GM12878 (cell line): ENCODE measurements at regions of chr16 and their contacts with region 1.

Region 1: GRCh38 chr16:11972128-11972527 is 4.4 kb upstream of the SNX29 start:
- DNase-seq: no peak
- ATAC-seq: no peak
- H3K4me3 ChIP-seq: no peak overlapping the region
- H3K27ac ChIP-seq: no peak overlapping the region
- H3K4me1 ChIP-seq: peaks cover 19% of the 10 kb centered on the region
- H3K27me3 ChIP-seq: no peaks in the 10 kb centered on the region
- CTCF ChIP-seq: peak; percentile 18 to 28 (median 21); a peak in 2 of 6 replicates
- EP300 ChIP-seq: no peak
- POLR2A ChIP-seq: no peak
- RAD21 ChIP-seq: no peak; the same call in 1 of the 2 replicates

Region 2: DNA sequence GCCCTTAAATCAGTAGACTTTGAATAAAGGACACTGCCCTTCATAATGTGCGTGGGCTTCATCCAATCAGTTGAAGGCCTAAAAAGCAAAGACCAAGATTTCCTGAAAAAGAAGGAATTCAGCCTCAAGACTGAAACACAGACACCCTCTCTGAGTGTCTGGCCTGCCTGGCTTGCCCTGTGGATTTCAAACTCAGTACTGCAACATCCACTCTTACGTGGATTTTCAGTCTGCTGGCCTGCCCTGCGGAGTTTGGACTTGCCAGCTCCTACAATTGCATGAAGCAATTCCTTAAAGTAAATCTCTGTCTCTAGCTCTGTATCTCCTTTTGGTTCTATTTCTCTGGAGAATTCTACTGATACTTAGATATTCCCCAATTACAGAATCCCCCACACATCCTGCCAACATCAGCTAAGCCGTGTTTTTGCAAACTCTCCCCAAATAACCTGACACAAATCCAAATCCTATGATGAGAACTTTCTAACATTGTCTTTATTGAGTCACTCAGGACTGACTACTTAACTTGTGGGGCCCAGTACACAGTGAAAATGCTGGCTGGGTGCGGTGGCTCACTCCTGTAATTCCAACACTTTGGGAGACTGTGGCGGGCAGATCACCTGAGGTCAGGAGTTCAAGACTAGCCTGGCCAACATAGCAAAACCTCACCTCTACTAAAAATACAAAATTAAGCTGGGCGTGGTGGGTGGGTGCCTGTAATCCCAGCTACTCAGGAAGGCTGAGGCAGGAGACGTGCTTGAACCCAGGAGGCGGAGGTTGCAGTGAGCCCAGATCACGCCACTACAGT is 14.3 kb before region 1 on chr16:
- CTCF ChIA-PET with region 1: interaction called, 73 read pairs
- POLR2A ChIA-PET with region 1: interaction called, 171 read pairs
- RAD21 ChIA-PET with region 1: interaction called, 162 read pairs
- SMC1A ChIA-PET with region 1: interaction called, 162 read pairs
- in situ Hi-C with region 1: no loop called
- intact Hi-C with region 1: no loop called
- DNase-seq: no peak
- ATAC-seq: no peak
- H3K4me3 ChIP-seq: no peak overlapping the region
- H3K27ac ChIP-seq: no peak overlapping the region
- H3K4me1 ChIP-seq: peaks cover 20% of the 10 kb centered on the region
- H3K27me3 ChIP-seq: no peaks in the 10 kb centered on the region
- CTCF ChIP-seq: no peak
- EP300 ChIP-seq: no peak
- POLR2A ChIP-seq: no peak
- RAD21 ChIP-seq: no peak